ENCODE measurements at regions of chr1 and their contacts with region 1.

Region 1: DNA sequence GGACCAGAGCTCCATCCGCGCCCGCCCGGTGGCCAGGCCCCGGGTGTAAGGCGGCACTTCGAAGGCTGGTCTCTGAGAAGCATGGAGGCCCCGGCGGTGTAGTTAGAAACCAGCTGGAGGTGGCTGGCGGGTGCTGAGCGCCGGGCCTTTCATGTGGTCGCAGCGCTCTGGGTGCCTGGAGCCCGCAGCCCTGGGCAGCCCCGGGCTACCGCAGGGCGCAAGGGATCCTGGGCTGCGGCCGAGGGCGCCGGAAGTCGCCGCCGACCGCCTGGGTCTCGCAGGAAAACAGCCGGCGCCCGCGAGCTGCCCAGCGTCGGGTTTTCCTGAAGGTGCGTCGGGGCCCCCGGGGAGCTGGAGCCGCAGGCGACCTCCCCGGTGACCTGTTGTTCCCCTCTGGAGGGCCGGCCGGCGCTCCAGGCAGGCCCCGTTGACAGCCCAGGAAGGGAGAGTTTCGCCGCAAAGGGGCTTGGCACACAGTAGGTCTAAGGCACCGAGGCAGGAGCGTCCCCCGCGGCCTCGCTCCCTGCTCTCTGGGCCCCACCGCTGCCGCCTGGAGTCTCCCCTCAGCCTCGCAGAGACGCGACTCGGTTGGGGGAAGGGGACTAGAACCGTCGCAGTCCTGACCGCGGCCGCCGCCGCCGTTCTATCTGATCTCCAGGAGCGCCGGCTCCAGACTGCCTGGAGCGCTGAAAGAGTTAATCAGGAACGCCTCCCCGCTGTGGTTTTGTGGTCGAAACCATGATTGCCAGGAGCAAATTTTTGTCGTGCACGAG is 2.7 kb downstream of the GRHL3 start:
- DNase-seq: peak; percentile 87
- ATAC-seq: peak; percentile 76
- H3K4me3 Mint-ChIP-seq: peak overlapping the region; percentile 62
- H3K27ac Mint-ChIP-seq: peak overlapping the region; percentile 51
- H3K4me1 Mint-ChIP-seq: peaks cover 40% of the 10 kb centered on the region
- H3K27me3 Mint-ChIP-seq: peaks cover 70% of the 10 kb centered on the region

Region 2: GRCh38 chr1:25223471-25223870 is 901.6 kb after region 1 on chr1:
- CTCF ChIA-PET with region 1: no interaction called
- POLR2A ChIA-PET with region 1: interaction called, 16 read pairs
- intact Hi-C with region 1: no loop called
- DNase-seq: no peak
- ATAC-seq: no peak
- H3K4me3 Mint-ChIP-seq: no peak overlapping the region
- H3K27ac Mint-ChIP-seq: peak overlapping the region; percentile 5
- H3K4me1 Mint-ChIP-seq: peaks cover 7% of the 10 kb centered on the region
- H3K27me3 Mint-ChIP-seq: no peaks in the 10 kb centered on the region

Measured in activated CD4-positive, alpha-beta T cell treated with anti-CD3 and anti-CD28 coated beads for 36 hours (primary cell).